ENCODE measurements at regions of chr2 and their contacts with region 1.

Region 1: DNA sequence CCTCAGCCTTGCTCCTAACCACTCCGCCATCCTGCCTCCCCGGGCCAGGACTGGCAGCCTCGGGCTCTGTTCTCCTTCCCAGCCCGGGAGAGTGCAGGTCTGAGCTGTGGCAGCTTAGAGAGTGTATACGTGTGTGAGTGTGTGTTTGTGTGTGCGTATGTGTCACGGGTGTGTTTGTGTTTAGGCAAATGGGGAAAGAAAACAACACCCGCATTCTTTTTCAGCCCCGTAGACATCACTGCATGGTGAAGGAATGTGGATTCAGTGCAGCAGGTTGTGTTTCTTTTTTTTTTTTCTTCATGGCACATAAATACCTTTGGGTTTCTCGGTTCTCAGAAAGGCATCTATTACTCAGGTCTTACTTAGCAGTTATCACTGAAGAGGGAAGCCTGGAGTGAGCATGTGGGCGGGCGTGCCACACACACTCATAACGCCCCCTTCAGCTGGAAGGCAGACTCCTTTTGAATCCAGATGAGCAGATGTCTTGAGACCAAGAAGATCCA is 44.2 kb downstream of the GLI2 start:
- DNase-seq: peak; percentile 59
- H3K4me3 ChIP-seq: no peak overlapping the region
- CTCF ChIP-seq: peak; percentile 36

Region 2: GRCh38 chr2:120722568-120723421 is 57.0 kb before region 1 on chr2:
- in situ Hi-C with region 1: no loop called
- DNase-seq: peak; percentile 31
- H3K4me3 ChIP-seq: no peak overlapping the region
- CTCF ChIP-seq: no peak

Region 3: DNA sequence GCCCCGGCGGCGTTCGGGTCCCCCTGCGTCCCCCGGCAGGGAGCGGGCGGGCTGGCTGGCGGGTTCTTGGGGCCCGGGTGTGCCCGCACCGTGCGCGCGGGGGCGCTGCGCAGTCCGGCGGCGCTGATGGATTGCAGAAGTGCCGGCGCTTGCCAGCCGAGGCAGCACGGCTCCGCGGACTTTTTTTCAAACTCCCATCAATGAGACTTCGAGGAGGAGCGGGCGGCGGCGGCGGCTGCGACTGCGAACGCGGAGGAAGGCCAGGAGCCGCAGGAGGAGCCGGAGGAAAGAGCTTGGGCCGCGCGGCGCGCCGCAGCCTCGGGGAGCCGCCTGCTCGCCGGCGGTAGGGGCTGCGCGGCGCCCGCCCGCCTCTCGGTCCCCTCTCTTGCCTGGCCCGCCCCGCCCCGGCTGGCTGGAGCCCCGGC is 44.1 kb before region 1 on chr2 and contains the start of gene GLI2:
- in situ Hi-C with region 1: loop called (anchors 10 kb)
- DNase-seq: peak; percentile 64
- H3K4me3 ChIP-seq: peak within 1 kb of the TSS; percentile 66
- CTCF ChIP-seq: peak; percentile 60

Region 4: GRCh38 chr2:120825370-120826259 is 45.8 kb after region 1 on chr2:
- in situ Hi-C with region 1: loop called (anchors 5 kb)
- DNase-seq: no peak
- H3K4me3 ChIP-seq: no peak overlapping the region
- CTCF ChIP-seq: no peak

Measured in astrocyte of the cerebellum (primary cell).